Testis (tissue), 5 donors: ENCODE measurements at regions of chr5 and their contacts with region 1.

Region 1: DNA sequence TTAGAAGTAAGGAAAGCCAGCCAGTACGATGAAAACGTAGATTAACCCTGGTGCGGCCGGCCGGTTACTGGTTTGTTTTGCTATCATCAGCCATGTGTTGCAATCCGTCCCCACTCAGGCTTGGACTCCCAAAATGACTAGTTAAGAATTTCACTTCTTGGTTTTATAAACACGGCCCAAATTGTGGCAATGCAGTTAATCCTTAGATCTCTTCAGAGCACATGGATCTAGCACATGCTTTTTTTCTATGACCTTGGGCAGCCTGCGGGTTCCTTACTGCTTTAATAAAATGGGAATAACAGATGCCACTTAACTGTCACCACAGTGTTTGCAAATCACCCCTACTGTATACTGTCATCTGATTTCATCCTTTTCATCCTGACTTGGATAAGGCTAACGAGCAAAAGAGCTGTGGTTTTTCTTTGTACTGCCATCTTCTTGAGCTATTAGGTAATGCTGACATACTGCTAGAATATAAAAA is 1.5 kb downstream of the NDFIP1 start:
- DNase-seq: peak; percentile 25
- H3K4me3 ChIP-seq: peak overlapping the region; percentile 87 to 88
- H3K27ac ChIP-seq: peak overlapping the region; percentile 99
- H3K4me1 ChIP-seq: peaks cover 29% of the 10 kb centered on the region
- H3K27me3 ChIP-seq: no peaks in the 10 kb centered on the region
- CTCF ChIP-seq: no peak
- POLR2A ChIP-seq: no peak

Region 2: GRCh38 chr5:142012792-142013388 is 97.2 kb before region 1 on chr5 and contains the start of gene GNPDA1:
- intact Hi-C with region 1: loop called (anchors 10 kb)
- DNase-seq: peak; percentile 87
- H3K4me3 ChIP-seq: peak within 1 kb of the TSS; percentile 66 to 77
- H3K27ac ChIP-seq: peak within 1 kb of the TSS; percentile 93 to 96
- H3K4me1 ChIP-seq: peaks cover 19% of the 10 kb centered on the region
- H3K27me3 ChIP-seq: no peaks in the 10 kb centered on the region
- CTCF ChIP-seq: peak in 1 of 3 experiments; percentile 44
- POLR2A ChIP-seq: no peak
- total RNA-seq, gene GNPDA1: 32.9 to 49.4 TPM

Region 3: GRCh38 chr5:142167458-142167857 is 57.4 kb after region 1 on chr5:
- intact Hi-C with region 1: no loop called
- DNase-seq: no peak
- H3K4me3 ChIP-seq: no peak overlapping the region
- H3K27ac ChIP-seq: no peak overlapping the region
- H3K4me1 ChIP-seq: peaks cover 7% of the 10 kb centered on the region
- H3K27me3 ChIP-seq: no peaks in the 10 kb centered on the region
- CTCF ChIP-seq: no peak
- POLR2A ChIP-seq: no peak

Region 4: DNA sequence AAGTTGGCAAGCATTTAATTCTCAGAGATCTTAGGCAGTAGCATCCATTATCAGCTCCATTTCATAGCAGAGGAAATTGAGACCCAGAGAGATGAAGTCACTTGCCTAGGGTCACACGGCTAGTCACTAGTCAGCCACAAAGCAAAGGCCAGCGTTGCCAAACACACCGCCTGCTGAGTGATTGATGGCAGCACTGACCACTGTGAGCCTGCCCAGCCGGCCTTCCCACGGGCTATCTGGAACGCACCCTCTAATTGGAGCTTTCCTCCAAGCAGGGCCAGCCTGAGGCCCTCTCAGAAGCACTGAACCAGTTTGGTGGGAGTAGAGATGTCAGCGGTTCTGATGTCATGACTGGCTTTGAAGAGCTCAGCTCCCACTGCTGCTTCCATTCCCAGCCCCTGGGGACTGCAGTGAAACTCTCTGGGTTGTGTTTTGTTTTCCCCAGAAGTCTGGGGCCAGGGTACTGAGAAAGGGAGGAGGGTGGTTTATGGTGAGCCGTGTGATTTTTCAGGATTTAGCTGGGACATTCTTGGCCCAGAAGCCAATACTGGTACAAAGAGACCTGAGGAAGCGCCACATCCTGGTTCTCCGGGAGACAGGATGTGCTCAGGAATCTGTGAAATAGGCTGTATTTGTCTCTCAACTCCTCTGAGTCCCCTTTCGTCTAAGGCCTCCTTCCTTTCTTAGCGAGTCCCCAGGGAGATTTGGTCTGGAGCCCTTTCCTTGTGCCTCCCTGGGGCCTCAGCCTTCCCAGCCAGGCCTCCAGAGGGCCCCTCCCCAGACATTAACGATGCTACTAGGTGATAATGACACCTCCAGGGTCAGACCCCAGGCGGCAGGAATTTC is 170.2 kb after region 1 on chr5:
- intact Hi-C with region 1: no loop called
- DNase-seq: no peak
- H3K4me3 ChIP-seq: no peak overlapping the region
- H3K27ac ChIP-seq: no peak overlapping the region
- H3K4me1 ChIP-seq: no peaks in the 10 kb centered on the region
- H3K27me3 ChIP-seq: no peaks in the 10 kb centered on the region
- CTCF ChIP-seq: no peak
- POLR2A ChIP-seq: no peak

Region 5: GRCh38 chr5:142364251-142365145 is 254.4 kb after region 1 on chr5:
- intact Hi-C with region 1: no loop called
- DNase-seq: no peak
- H3K4me3 ChIP-seq: no peak overlapping the region
- H3K27ac ChIP-seq: no peak overlapping the region
- H3K4me1 ChIP-seq: peaks cover 8% of the 10 kb centered on the region
- H3K27me3 ChIP-seq: no peaks in the 10 kb centered on the region
- CTCF ChIP-seq: no peak
- POLR2A ChIP-seq: no peak